Esophagus muscularis mucosa (tissue), 4 donors: ENCODE measurements at regions of chr2 and their contacts with region 1.

Region 1: GRCh38 chr2:96760036-96760985 is at the start of gene CNNM4:
- DNase-seq: peak; percentile 97
- H3K4me3 ChIP-seq: peak within 1 kb of the TSS; percentile 72 to 74 (median 73)
- H3K27ac ChIP-seq: peak within 1 kb of the TSS; percentile 76 to 88 (median 84)
- H3K4me1 ChIP-seq: peaks cover 35 to 47% (median 46%) of the 10 kb centered on the region in 4 donors
- H3K27me3 ChIP-seq: no peaks in the 10 kb centered on the region
- CTCF ChIP-seq: no peak
- EP300 ChIP-seq: no peak
- POLR2A ChIP-seq: no peak
- total RNA-seq, gene CNNM4: 3.3 to 7.5 (median 5.3) TPM

Region 2: DNA sequence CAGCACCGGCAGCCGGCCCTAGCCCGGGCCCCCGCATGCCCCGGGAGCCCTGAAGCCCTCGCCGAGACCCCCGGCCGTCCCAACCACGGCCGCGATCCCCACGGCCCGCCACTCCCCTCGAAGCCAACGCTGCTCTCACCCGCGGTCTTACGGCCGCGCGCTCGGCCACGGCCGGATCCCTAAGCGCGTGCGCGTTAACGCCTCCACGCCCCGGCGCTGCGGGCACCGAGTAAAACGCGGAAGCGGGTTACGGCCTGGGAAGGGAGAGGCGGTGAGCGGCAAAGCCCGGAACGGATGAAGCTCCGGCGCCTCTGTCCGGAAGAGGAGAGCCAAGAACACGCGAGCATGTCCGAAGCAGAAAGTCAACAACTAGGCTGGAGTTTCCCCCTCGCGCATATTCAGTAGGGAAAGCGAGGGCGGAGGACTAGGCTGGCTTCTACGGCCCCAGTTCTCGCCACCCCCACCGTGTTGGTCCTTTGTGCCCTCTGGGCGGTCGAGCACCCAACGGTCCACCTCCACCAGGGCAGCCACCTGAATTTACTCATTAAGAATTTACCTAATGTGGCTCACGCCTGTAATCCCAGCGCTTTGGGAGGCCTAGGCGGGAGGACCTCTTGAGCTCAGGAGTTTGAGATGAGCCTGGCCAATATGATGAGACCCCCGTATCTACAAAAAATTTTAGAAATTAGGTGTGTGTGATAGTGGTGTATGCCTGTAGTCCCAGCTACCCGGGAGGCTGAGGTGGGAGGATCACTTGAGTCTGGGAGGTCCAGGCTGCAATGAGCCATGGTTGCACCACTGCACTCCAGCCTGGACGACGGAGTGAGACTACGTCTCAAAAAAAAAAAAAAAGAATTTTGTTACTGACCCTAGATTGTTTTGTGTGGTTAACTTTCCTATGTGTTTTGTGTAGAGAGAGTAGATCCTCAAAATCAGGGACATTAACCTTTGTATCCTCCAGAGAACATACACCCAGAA is 121.9 kb before region 1 on chr2 and contains the start of gene KANSL3:
- intact Hi-C with region 1: loop called (anchors 5 kb)
- DNase-seq: peak; percentile 96
- H3K4me3 ChIP-seq: peak within 1 kb of the TSS; percentile 64 to 83 (median 71)
- H3K27ac ChIP-seq: peak within 1 kb of the TSS; percentile 91 to 97 (median 94)
- H3K4me1 ChIP-seq: peaks cover 27 to 46% (median 43%) of the 10 kb centered on the region in 4 donors
- H3K27me3 ChIP-seq: no peaks in the 10 kb centered on the region
- CTCF ChIP-seq: peak in 1 of 3 experiments; percentile 40
- EP300 ChIP-seq: no peak
- POLR2A ChIP-seq: peak; percentile 98
- total RNA-seq, gene KANSL3: 54.2 to 63.1 (median 59.5) TPM

Region 3: DNA sequence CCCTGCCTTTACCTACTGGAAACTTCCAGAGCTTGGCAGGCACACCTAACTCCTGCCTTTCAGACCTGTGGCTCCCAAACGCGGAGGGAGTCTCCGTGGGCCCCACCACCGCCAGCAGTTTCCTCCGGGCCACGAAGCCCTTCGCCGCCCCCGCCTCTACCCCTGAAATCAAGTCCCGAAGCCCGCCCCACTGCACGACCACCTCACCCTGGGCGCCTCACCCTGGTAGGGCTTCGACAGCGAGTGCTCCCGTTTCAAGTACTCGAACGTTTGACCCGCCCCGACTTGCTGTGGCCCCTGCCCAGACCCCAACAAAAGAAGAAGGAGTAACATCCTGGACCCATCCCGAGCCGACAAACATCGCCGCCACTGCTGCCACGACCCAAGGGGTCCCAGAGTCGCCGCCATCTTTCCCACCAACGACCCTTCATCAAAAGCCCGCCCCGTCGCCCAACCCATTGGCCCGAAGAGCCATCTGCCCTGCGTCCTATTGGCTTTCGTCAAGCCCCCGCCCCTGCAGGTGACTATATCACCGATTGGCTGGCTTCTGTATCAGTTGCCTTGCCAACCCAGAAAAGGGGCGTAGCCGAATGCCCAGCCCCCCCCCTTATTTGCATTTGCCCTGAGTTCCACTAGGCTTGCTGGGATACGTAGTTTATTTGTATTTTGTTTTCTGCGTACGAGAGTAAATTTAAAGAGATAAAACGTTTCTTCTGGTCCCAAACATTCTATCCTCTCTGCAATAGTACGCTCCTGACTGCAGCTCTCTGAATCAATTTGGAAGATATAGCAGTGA is 20.5 kb before region 1 on chr2 and contains the start of gene LMAN2L:
- intact Hi-C with region 1: loop called (anchors 2 kb)
- DNase-seq: peak; percentile 100
- H3K4me3 ChIP-seq: peak within 1 kb of the TSS; percentile 73 to 93 (median 84)
- H3K27ac ChIP-seq: peak within 1 kb of the TSS; percentile 75 to 86 (median 81)
- H3K4me1 ChIP-seq: peaks cover 30 to 55% (median 44%) of the 10 kb centered on the region in 4 donors
- H3K27me3 ChIP-seq: no peaks in the 10 kb centered on the region
- CTCF ChIP-seq: no peak
- EP300 ChIP-seq: no peak
- POLR2A ChIP-seq: no peak
- total RNA-seq, gene LMAN2L: 13.7 to 22.1 (median 21.2) TPM

Region 4: GRCh38 chr2:96801005-96801785 is 40.9 kb after region 1 on chr2:
- intact Hi-C with region 1: loop called (anchors 2 kb)
- DNase-seq: no peak
- H3K4me3 ChIP-seq: no peak overlapping the region
- H3K27ac ChIP-seq: no peak overlapping the region
- H3K4me1 ChIP-seq: peaks cover 5 to 10% (median 7%) of the 10 kb centered on the region in 4 donors
- H3K27me3 ChIP-seq: no peaks in the 10 kb centered on the region
- CTCF ChIP-seq: peak; percentile 78 to 93 (median 90)
- EP300 ChIP-seq: no peak
- POLR2A ChIP-seq: no peak

Region 5: DNA sequence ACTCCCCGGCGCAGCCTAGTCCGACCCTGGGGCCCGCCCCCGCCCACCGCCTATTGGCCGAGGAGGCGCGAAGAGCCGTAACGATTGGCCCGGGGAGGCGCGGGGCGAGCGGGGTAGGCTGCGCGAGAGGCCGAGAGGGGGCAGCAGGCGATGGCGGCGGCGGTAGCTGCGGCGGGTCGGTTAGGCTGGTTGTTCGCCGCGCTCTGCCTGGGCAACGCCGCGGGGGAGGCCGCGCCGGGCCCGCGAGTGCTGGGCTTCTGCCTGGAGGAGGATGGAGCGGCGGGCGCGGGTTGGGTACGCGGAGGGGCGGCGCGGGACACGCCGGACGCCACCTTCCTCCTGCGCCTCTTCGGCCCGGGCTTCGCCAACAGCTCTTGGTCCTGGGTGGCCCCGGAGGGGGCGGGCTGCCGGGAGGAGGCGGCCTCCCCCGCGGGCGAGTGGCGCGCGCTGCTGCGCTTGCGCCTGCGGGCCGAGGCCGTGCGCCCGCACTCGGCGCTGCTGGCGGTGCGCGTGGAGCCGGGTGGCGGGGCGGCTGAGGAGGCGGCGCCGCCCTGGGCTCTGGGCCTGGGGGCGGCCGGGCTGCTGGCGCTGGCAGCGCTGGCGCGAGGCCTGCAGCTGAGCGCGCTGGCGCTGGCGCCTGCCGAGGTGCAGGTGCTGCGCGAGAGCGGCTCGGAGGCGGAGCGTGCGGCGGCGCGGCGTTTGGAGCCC is 56.0 kb after region 1 on chr2 and contains the start of gene CNNM3:
- intact Hi-C with region 1: loop called (anchors 5 kb)
- DNase-seq: peak; percentile 99
- H3K4me3 ChIP-seq: peak within 1 kb of the TSS; percentile 69 to 98 (median 86)
- H3K27ac ChIP-seq: peak within 1 kb of the TSS; percentile 94 to 97 (median 96)
- H3K4me1 ChIP-seq: peaks cover 55 to 62% (median 58%) of the 10 kb centered on the region in 4 donors
- H3K27me3 ChIP-seq: no peaks in the 10 kb centered on the region
- CTCF ChIP-seq: peak; percentile 50 to 85 (median 56)
- EP300 ChIP-seq: no peak
- POLR2A ChIP-seq: peak; percentile 58
- total RNA-seq, gene CNNM3: 11.8 to 30.3 (median 22.1) TPM